ENCODE measurements at regions of chr20 and their contacts with region 1.

Region 1: DNA sequence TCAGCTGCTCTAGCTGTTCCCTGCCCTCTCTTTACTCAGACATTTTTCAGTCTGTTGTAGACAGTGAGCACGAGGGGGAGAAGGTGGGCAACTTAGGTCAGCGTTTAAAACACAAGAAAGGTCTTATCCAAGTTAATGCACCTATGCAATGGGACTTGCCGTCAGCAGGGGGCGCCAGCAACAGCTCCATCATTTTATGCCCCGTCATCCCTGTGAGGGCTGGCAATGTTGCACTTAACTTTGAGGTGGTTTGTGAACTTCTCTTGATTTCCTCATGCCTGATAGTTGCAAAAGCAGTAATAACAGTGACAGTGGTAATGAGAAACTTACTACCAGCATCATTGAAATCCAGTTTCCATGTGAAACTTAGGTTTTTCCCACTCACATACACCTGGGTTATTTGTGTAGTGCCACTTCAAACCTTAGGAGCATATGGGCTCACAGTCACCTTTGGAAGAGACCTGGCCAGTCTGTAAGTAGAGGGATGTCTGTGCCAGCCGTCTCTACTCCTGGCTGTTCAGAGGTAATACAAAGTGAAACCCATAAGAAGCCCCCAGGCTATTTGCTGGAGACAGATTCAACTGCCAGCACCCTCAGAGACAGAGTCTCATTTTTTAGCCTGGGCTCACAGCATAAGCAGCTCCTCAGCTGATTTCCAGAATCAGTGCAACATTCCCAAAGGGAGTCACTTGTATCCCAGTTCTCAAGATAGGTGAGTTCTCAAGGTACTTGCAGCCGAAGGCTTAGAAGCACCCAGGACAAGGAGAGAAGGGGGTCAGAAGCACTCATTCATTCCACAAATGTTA is 44.8 kb upstream of the ID1 start:
- DNase-seq: peak; percentile 70
- CTCF ChIP-seq: peak; percentile 83

Region 2: DNA sequence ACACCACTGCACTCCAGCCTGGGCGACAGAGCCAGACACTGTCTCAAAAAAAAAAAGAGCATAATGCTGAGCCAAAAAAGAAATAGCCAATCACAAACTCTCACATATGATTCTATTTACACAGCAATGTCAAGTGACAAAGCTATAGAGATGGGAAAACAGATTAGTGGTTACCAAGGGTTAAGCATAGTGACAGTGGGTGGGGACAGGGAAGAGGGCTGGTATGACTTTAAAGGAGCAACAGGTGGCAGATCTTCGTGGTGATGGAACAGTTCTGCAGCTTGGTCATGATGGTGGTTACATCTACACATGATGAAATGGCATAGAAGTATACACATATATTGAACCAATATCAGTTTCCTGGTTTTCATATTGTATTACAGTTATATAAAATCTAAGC is 178.5 kb before region 1 on chr20:
- in situ Hi-C with region 1: no loop called
- DNase-seq: no peak
- CTCF ChIP-seq: no peak

Region 3: GRCh38 chr20:31452575-31452974 is 107.7 kb before region 1 on chr20:
- in situ Hi-C with region 1: no loop called
- DNase-seq: no peak
- CTCF ChIP-seq: no peak

Region 4: GRCh38 chr20:31620252-31620651 is 60.0 kb after region 1 on chr20:
- in situ Hi-C with region 1: loop called (anchors 5 kb)
- DNase-seq: no peak
- CTCF ChIP-seq: no peak

Region 5: GRCh38 chr20:31684153-31685015 is 124.1 kb after region 1 on chr20:
- in situ Hi-C with region 1: no loop called
- DNase-seq: no peak
- CTCF ChIP-seq: no peak

Measured in GM13977 (cell line).